ENCODE measurements at regions of chr10 and their contacts with region 1.

Region 1: GRCh38 chr10:67779465-67780203 is 58.4 kb downstream of the DNAJC12 start:
- DNase-seq: peak; percentile 27 to 84 (median 77)
- ATAC-seq: peak; percentile 91
- H3K4me3 ChIP-seq: no peak overlapping the region
- H3K4me3 Mint-ChIP-seq: no peak overlapping the region
- H3K27ac ChIP-seq: no peak overlapping the region
- H3K27ac Mint-ChIP-seq: peak overlapping the region in 2 of 9 donors; percentile 1 to 8
- H3K4me1 ChIP-seq: no peaks in the 10 kb centered on the region
- H3K4me1 Mint-ChIP-seq: peaks cover 10 to 39% (median 14%) of the 10 kb centered on the region in 7 donors
- H3K27me3 ChIP-seq: no peaks in the 10 kb centered on the region
- H3K27me3 Mint-ChIP-seq: no peaks in the 10 kb centered on the region

Region 2: GRCh38 chr10:67306588-67307205 is 472.9 kb before region 1 on chr10:
- CTCF ChIA-PET with region 1: no interaction called
- POLR2A ChIA-PET with region 1: no interaction called
- intact Hi-C with region 1: loop called in 1 of 2 experiments (anchors 10 kb)
- DNase-seq: no peak
- ATAC-seq: no peak
- H3K4me3 ChIP-seq: no peak overlapping the region
- H3K4me3 Mint-ChIP-seq: no peak overlapping the region
- H3K27ac ChIP-seq: no peak overlapping the region
- H3K27ac Mint-ChIP-seq: no peak overlapping the region
- H3K4me1 ChIP-seq: no peaks in the 10 kb centered on the region
- H3K4me1 Mint-ChIP-seq: no peaks in the 10 kb centered on the region
- H3K27me3 ChIP-seq: no peaks in the 10 kb centered on the region
- H3K27me3 Mint-ChIP-seq: peaks cover 0 to 3% (median 0%) of the 10 kb centered on the region in 5 donors

Region 3: DNA sequence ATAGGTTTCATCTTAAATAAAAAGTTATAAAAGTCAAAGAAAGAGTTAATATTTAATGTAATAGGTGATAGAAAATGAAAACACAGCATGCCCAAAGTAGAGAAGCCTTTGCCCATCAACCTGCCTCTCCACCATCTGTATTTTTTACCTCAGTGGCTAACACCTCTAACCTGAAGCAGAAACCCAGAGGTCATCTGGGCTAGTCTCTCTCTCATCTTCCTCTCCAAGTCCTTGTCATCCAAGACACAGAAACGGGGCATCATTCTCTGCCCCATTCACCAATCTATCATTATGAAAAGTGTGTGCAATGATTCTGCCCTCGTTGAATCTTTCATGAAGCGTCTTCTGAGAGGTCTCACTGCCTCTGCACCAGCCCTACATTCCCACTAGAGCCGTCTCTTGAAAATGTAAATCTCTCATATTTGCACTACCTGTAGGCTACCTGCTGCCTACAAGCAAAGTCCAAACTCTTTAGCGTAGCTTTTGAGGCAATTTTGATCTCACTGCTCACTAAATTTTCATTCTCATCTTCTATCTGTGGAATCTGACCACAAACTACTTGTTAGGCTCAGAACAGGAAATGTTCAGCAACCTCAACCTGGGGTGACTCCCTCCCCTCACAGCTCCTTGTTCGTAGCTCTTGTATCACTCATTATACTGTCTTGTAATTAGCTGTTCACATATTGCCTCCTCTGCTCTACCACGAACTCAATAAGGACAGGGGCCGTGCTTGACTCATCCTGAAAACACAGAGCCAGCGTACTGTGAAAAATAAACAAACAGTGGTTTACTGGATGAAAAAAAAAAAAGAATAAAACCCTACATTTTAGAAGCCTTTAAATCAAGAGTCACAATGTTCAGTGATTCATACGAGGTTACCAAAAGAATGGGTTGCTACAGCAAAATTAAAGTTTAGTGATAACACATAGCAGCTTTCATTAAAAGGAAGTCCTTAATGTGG is 166.8 kb before region 1 on chr10:
- CTCF ChIA-PET with region 1: interaction called, 4 read pairs
- POLR2A ChIA-PET with region 1: no interaction called
- intact Hi-C with region 1: loop called (anchors 1 to 2 kb)
- DNase-seq: peak in 8 of 9 donors; percentile 53 to 82 (median 73)
- ATAC-seq: peak; percentile 97
- H3K4me3 ChIP-seq: peak overlapping the region; percentile 36
- H3K4me3 Mint-ChIP-seq: peak overlapping the region; percentile 64 to 83 (median 75)
- H3K27ac ChIP-seq: no peak overlapping the region
- H3K27ac Mint-ChIP-seq: peak overlapping the region; percentile 8 to 88 (median 79)
- H3K4me1 ChIP-seq: peaks cover 17 to 24% of the 10 kb centered on the region in 2 donors
- H3K4me1 Mint-ChIP-seq: peaks cover 23 to 44% (median 33%) of the 10 kb centered on the region in 7 donors
- H3K27me3 ChIP-seq: no peaks in the 10 kb centered on the region
- H3K27me3 Mint-ChIP-seq: peaks cover 0 to 29% (median 0%) of the 10 kb centered on the region in 5 donors

Region 4: GRCh38 chr10:67697724-67698131 is 81.9 kb before region 1 on chr10:
- CTCF ChIA-PET with region 1: interaction called, 155 read pairs
- POLR2A ChIA-PET with region 1: interaction called, 16 read pairs
- intact Hi-C with region 1: loop called (anchors 1 kb)
- DNase-seq: peak in 7 of 9 donors; percentile 34 to 68 (median 56)
- ATAC-seq: peak; percentile 88
- H3K4me3 ChIP-seq: no peak overlapping the region
- H3K4me3 Mint-ChIP-seq: no peak overlapping the region
- H3K27ac ChIP-seq: no peak overlapping the region
- H3K27ac Mint-ChIP-seq: peak overlapping the region in 1 of 9 donors; percentile 56
- H3K4me1 ChIP-seq: no peaks in the 10 kb centered on the region
- H3K4me1 Mint-ChIP-seq: peaks cover 0 to 15% (median 5%) of the 10 kb centered on the region in 7 donors
- H3K27me3 ChIP-seq: no peaks in the 10 kb centered on the region
- H3K27me3 Mint-ChIP-seq: peaks cover 4 to 41% (median 29%) of the 10 kb centered on the region in 5 donors

Region 5: DNA sequence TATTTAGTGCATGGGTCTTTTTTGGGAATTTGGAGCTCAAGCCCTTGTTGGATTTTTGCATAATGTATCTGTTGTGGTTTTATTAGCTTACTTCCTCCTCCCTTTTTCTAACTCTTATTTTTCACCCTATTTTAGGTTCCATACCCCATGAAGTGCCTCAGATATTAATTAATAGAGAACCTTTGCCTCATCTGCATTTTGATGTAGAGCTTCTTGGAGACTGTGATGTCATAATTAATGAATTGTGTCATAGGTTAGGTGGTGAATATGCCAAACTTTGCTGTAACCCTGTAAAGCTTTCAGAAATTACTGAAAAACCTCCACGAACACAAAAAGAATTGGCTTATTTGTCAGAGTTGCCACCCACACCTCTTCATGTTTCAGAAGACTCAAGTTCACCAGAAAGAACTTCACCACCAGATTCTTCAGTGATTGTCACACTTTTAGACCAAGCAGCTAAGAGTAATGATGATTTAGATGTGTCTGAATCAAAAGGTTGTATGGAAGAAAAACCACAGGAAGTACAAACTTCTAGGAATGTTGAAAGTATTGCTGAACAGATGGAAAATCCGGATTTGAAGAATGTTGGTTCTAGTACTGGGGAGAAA is 132.8 kb after region 1 on chr10:
- CTCF ChIA-PET with region 1: no interaction called
- POLR2A ChIA-PET with region 1: no interaction called
- intact Hi-C with region 1: no loop called
- DNase-seq: no peak
- ATAC-seq: no peak
- H3K4me3 ChIP-seq: no peak overlapping the region
- H3K4me3 Mint-ChIP-seq: no peak overlapping the region
- H3K27ac ChIP-seq: no peak overlapping the region
- H3K27ac Mint-ChIP-seq: peak overlapping the region; percentile 6 to 69 (median 36)
- H3K4me1 ChIP-seq: no peaks in the 10 kb centered on the region
- H3K4me1 Mint-ChIP-seq: peaks cover 14 to 47% (median 27%) of the 10 kb centered on the region in 7 donors
- H3K27me3 ChIP-seq: no peaks in the 10 kb centered on the region
- H3K27me3 Mint-ChIP-seq: no peaks in the 10 kb centered on the region